CD4-positive, alpha-beta T cell (primary cell): ENCODE measurements at regions of chr12 and their contacts with region 1.

Region 1: GRCh38 chr12:50763639-50764285 is at the start of gene ATF1:
- DNase-seq: peak; percentile 79 to 96 (median 86)
- ATAC-seq: peak; percentile 76
- H3K4me3 ChIP-seq: peak within 1 kb of the TSS; percentile 83
- H3K4me3 Mint-ChIP-seq: peak within 1 kb of the TSS; percentile 91
- H3K27ac ChIP-seq: peak within 1 kb of the TSS; percentile 92 to 96
- H3K27ac Mint-ChIP-seq: peak within 1 kb of the TSS; percentile 93
- H3K4me1 ChIP-seq: peaks cover 27% of the 10 kb centered on the region
- H3K4me1 Mint-ChIP-seq: peaks cover 50% of the 10 kb centered on the region
- H3K27me3 ChIP-seq: no peaks in the 10 kb centered on the region
- H3K27me3 Mint-ChIP-seq: no peaks in the 10 kb centered on the region
- CTCF ChIP-seq: no peak
- total RNA-seq, gene ATF1: 11.3 TPM

Region 2: GRCh38 chr12:50084775-50085614 is 678.8 kb before region 1 on chr12 and contains the start of gene SMARCD1:
- CTCF ChIA-PET with region 1: no interaction called
- POLR2A ChIA-PET with region 1: interaction called, 3 read pairs
- intact Hi-C with region 1: loop called in 1 of 2 experiments (anchors 10 kb)
- DNase-seq: peak; percentile 70 to 93 (median 84)
- ATAC-seq: peak; percentile 83
- H3K4me3 ChIP-seq: peak within 1 kb of the TSS; percentile 95
- H3K4me3 Mint-ChIP-seq: peak within 1 kb of the TSS; percentile 96
- H3K27ac ChIP-seq: peak within 1 kb of the TSS; percentile 82 to 95
- H3K27ac Mint-ChIP-seq: peak within 1 kb of the TSS; percentile 99
- H3K4me1 ChIP-seq: peaks cover 21% of the 10 kb centered on the region
- H3K4me1 Mint-ChIP-seq: peaks cover 43% of the 10 kb centered on the region
- H3K27me3 ChIP-seq: no peaks in the 10 kb centered on the region
- H3K27me3 Mint-ChIP-seq: no peaks in the 10 kb centered on the region
- CTCF ChIP-seq: peak; percentile 45
- total RNA-seq, gene SMARCD1: 78.9 to 80.0 TPM

Region 3: DNA sequence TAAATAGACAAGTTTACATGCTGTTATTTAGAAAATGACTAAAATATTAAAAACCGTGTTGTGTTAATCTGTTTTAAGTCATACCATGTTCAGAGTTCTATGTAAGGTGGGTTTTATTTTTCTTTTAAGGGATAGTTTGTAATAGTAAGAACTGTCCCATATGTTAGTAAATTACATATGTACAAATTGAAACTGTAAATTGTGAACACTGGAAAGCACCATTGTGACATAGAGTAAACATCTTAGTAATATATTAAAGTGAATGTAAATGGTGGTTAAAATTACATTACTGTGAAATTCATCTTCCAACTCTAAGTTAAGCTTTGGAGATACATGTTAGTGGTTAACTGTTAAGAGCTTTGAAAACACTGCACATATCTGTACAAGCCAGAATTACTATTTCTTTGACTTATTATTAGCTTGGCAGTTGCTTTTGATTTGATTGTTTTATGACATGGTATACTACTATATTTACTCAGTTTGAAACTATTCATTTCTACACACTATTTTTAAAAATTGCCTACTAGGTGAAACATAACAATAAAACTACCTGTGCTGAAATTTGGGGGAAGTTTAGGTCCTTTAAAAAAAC is 286.4 kb before region 1 on chr12:
- CTCF ChIA-PET with region 1: no interaction called
- POLR2A ChIA-PET with region 1: no interaction called
- intact Hi-C with region 1: no loop called
- DNase-seq: no peak
- ATAC-seq: no peak
- H3K4me3 ChIP-seq: no peak overlapping the region
- H3K4me3 Mint-ChIP-seq: no peak overlapping the region
- H3K27ac ChIP-seq: no peak overlapping the region
- H3K27ac Mint-ChIP-seq: no peak overlapping the region
- H3K4me1 ChIP-seq: no peaks in the 10 kb centered on the region
- H3K4me1 Mint-ChIP-seq: no peaks in the 10 kb centered on the region
- H3K27me3 ChIP-seq: no peaks in the 10 kb centered on the region
- H3K27me3 Mint-ChIP-seq: no peaks in the 10 kb centered on the region
- CTCF ChIP-seq: no peak

Region 4: GRCh38 chr12:50504798-50505385 is 258.9 kb before region 1 on chr12 and contains the start of gene DIP2B:
- CTCF ChIA-PET with region 1: interaction called, 6 read pairs
- POLR2A ChIA-PET with region 1: interaction called, 10 read pairs
- intact Hi-C with region 1: loop called in 1 of 2 experiments (anchors 2 kb)
- DNase-seq: peak; percentile 93 to 98 (median 96)
- ATAC-seq: peak; percentile 90
- H3K4me3 ChIP-seq: peak within 1 kb of the TSS; percentile 88
- H3K4me3 Mint-ChIP-seq: peak within 1 kb of the TSS; percentile 99
- H3K27ac ChIP-seq: peak within 1 kb of the TSS; percentile 11 to 90
- H3K27ac Mint-ChIP-seq: peak within 1 kb of the TSS; percentile 85
- H3K4me1 ChIP-seq: peaks cover 42% of the 10 kb centered on the region
- H3K4me1 Mint-ChIP-seq: peaks cover 51% of the 10 kb centered on the region
- H3K27me3 ChIP-seq: no peaks in the 10 kb centered on the region
- H3K27me3 Mint-ChIP-seq: no peaks in the 10 kb centered on the region
- CTCF ChIP-seq: peak; percentile 92
- total RNA-seq, gene DIP2B: 29.5 to 30.0 TPM

Region 5: DNA sequence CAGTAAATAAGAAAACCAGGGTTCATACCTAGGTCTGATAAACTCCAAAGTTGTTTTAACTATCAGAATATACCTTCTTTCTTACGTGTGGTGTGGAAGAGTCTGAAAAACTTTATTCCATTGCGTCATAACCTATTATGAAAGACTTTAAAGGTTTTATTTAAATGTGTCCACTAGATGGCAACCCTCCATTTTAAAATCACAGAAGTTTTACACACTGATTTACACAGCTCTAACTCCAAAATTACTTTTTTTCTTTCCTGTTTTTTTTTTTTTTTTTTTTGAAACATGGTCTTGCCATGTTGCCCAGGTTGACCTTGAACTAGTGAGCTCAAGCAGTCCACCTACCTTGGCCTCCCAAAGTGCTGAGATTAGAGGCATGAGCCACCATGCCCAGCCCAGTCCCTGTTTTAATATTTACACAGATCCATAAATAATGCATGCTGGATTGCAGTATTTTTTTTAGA is 61.6 kb after region 1 on chr12:
- CTCF ChIA-PET with region 1: interaction called, 5 read pairs
- POLR2A ChIA-PET with region 1: interaction called, 10 read pairs
- intact Hi-C with region 1: loop called (anchors 1 to 5 kb)
- DNase-seq: peak in 3 of 14 experiments; percentile 75 to 77 (median 77)
- ATAC-seq: peak; percentile 91
- H3K4me3 ChIP-seq: no peak overlapping the region
- H3K4me3 Mint-ChIP-seq: no peak overlapping the region
- H3K27ac ChIP-seq: peak overlapping the region in 1 of 2 donors; percentile 54
- H3K27ac Mint-ChIP-seq: peak overlapping the region; percentile 83
- H3K4me1 ChIP-seq: peaks cover 5% of the 10 kb centered on the region
- H3K4me1 Mint-ChIP-seq: peaks cover 6% of the 10 kb centered on the region
- H3K27me3 ChIP-seq: peaks cover 0 to 3% of the 10 kb centered on the region in 2 experiments
- H3K27me3 Mint-ChIP-seq: no peaks in the 10 kb centered on the region
- CTCF ChIP-seq: peak; percentile 71

Region 6: GRCh38 chr12:50862316-50862715 is 98.6 kb after region 1 on chr12:
- CTCF ChIA-PET with region 1: no interaction called
- POLR2A ChIA-PET with region 1: no interaction called
- intact Hi-C with region 1: no loop called
- DNase-seq: no peak
- ATAC-seq: no peak
- H3K4me3 ChIP-seq: no peak overlapping the region
- H3K4me3 Mint-ChIP-seq: no peak overlapping the region
- H3K27ac ChIP-seq: no peak overlapping the region
- H3K27ac Mint-ChIP-seq: no peak overlapping the region
- H3K4me1 ChIP-seq: no peaks in the 10 kb centered on the region
- H3K4me1 Mint-ChIP-seq: peaks cover 9% of the 10 kb centered on the region
- H3K27me3 ChIP-seq: no peaks in the 10 kb centered on the region
- H3K27me3 Mint-ChIP-seq: no peaks in the 10 kb centered on the region
- CTCF ChIP-seq: no peak

Region 7: DNA sequence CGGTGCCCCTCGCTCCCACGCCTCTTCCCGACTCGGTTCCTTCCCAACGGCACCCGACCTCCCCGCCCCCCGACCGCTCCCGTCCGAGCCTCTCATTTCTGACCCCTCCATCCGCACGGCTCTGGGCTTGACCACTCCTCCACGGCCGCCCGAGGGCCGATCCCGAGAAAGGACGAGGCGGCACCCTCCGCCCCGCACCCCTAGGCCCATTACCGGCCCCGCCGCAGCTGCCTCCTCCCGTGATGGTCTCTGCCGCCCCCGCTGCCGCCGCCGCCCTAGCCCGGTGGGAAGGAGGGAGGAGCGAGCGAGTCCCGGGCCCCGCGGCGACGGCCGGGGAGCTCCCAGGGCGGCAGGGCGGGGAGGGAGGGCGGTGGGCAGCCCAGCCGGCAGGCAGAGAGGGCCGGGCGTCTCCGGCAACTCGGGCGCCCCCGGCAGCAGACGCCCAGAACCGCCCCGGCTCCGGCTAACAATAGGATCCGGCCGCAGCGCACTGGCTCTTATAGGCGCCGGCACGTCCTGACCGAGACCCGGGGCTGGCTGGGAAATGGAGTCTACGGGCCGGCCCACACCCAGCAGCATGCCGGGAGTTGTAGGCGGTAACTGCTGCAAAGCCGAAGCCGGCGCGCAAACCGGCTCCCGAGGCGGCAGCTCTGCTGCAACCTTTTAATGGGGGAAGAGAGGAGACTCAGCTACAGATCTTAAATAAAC is 319.5 kb after region 1 on chr12 and contains the start of gene CSRNP2:
- CTCF ChIA-PET with region 1: interaction called, 3 read pairs
- POLR2A ChIA-PET with region 1: interaction called, 10 read pairs
- intact Hi-C with region 1: loop called (anchors 5 to 10 kb)
- DNase-seq: peak; percentile 92 to 97 (median 94)
- ATAC-seq: peak; percentile 99
- H3K4me3 ChIP-seq: peak within 1 kb of the TSS; percentile 84
- H3K4me3 Mint-ChIP-seq: peak within 1 kb of the TSS; percentile 95
- H3K27ac ChIP-seq: peak within 1 kb of the TSS; percentile 40 to 71
- H3K27ac Mint-ChIP-seq: peak within 1 kb of the TSS; percentile 87
- H3K4me1 ChIP-seq: peaks cover 20% of the 10 kb centered on the region
- H3K4me1 Mint-ChIP-seq: peaks cover 41% of the 10 kb centered on the region
- H3K27me3 ChIP-seq: no peaks in the 10 kb centered on the region
- H3K27me3 Mint-ChIP-seq: no peaks in the 10 kb centered on the region
- CTCF ChIP-seq: peak; percentile 34
- total RNA-seq, gene CSRNP2: 14.4 to 16.5 TPM

Region 8: DNA sequence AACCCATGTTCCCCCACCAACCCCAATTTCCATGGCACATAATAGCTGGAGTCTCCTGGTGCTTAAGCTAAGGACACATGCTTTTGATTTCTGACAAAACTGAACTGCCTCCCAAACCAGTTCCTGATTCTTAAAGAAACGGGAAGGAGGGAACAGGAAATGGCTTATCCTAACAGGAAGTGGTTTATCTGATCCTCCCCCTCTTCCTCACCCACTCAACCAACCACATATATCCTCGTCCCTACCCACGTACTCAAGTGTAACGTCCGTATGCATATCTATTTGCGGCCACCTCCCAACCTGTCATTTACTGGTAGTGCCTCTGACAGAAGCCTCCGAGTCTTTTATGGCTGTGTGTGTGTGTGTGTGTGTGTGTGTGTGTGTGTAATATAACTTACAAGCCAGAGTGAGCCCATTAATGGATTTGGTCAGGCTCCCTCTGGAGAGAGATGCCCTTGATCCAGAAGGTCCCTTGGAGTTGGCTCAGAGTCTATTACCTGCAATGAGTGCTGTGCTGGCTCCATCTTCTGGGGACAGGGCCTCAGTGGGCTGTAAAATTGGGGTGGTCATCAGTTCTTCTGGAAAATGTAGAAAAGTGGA is 482.6 kb after region 1 on chr12:
- CTCF ChIA-PET with region 1: no interaction called
- POLR2A ChIA-PET with region 1: no interaction called
- intact Hi-C with region 1: loop called in 1 of 2 experiments (anchors 10 kb)
- DNase-seq: peak in 8 of 14 experiments; percentile 7 to 72 (median 44)
- ATAC-seq: peak; percentile 78
- H3K4me3 ChIP-seq: no peak overlapping the region
- H3K4me3 Mint-ChIP-seq: peak overlapping the region; percentile 4
- H3K27ac ChIP-seq: peak overlapping the region; percentile 55 to 74
- H3K27ac Mint-ChIP-seq: peak overlapping the region; percentile 84
- H3K4me1 ChIP-seq: peaks cover 53% of the 10 kb centered on the region
- H3K4me1 Mint-ChIP-seq: peaks cover 67% of the 10 kb centered on the region
- H3K27me3 ChIP-seq: no peaks in the 10 kb centered on the region
- H3K27me3 Mint-ChIP-seq: no peaks in the 10 kb centered on the region
- CTCF ChIP-seq: no peak